ENCODE measurements at regions of chr14 and their contacts with region 1.

Region 1: GRCh38 chr14:94180655-94181271 is 6.6 kb downstream of the PPP4R4 start:
- DNase-seq: peak; percentile 35
- ATAC-seq: peak; percentile 89
- H3K4me3 ChIP-seq: 0 out of 4 replicates have a peak overlapping the region, but pooled peaks of 1 of the 2 experiments have one; percentile 8
- H3K27ac ChIP-seq: no peak overlapping the region
- H3K4me1 ChIP-seq: peaks cover 0 to 12% of the 10 kb centered on the region in 2 experiments; a peak in 3 of 4 replicates
- H3K27me3 ChIP-seq: no peaks in the 10 kb centered on the region
- CTCF ChIP-seq: peak; percentile 48 to 71 (median 67)
- POLR2A ChIP-seq: no peak
- RAD21 ChIP-seq: peak; percentile 73

Region 2: GRCh38 chr14:94051115-94051514 is 129.6 kb before region 1 on chr14:
- CTCF ChIA-PET with region 1: no interaction called
- POLR2A ChIA-PET with region 1: no interaction called
- RAD21 ChIA-PET with region 1: no interaction called
- intact Hi-C with region 1: loop called (anchors 2 kb)
- DNase-seq: no peak
- ATAC-seq: no peak
- H3K4me3 ChIP-seq: no peak overlapping the region
- H3K27ac ChIP-seq: no peak overlapping the region
- H3K4me1 ChIP-seq: no peaks in the 10 kb centered on the region
- H3K27me3 ChIP-seq: no peaks in the 10 kb centered on the region
- CTCF ChIP-seq: peak; percentile 34 to 42 (median 37); a peak in 4 of 6 replicates
- POLR2A ChIP-seq: no peak
- RAD21 ChIP-seq: peak; percentile 39; the same call in 1 of the 2 replicates